H1 (cell line): ENCODE measurements at regions of chr18 and their contacts with region 1.

Region 1: DNA sequence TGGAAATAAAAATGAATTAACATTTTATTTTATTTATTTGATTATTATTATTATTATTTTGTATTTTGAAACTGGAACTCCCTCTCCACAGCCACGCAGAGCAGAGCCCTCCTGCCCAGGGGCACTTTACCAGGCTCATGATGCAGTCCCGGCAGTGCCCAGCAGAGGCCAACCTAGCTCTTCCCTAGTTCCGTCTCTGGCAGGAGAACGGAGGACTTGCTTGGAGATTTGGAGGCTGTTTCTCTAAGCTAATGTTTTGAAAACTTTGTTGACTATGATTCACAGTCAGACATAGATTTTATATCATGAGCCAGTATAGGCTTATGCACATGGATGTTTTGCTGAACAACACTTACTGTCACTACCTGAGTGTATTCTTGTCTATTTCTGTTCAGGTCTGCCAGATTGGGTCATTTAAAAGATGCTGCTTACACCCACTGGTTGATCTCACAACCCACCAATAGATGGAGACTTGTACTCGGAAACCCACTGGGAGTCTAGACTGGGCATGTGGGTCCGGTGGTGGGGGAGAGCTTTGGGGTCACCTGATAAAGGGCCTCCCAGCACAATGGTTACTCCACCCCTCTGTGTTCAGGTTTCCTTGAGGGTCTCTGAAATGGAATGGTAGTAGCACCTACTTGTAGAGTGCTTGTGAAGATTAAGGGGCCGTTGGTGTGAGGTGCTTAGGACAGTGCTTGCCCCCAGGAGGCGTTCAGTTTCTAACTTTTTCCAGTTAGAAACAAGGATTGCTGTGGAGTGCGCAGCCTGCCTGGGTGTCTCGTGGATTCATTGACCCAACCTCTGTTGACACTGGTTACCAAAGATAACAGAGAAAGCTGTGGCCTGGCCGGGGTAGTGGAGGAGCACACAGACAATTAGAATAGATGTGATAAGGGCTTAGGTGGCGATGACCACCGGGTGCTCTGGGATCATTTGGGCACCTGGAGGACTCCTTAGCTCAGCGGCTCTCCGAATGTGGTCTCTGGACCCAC is 177.3 kb downstream of the HAUS1 start:
- DNase-seq: peak; percentile 50 to 88
- H3K4me3 ChIP-seq: no peak overlapping the region
- H3K27ac ChIP-seq: no peak overlapping the region
- H3K4me1 ChIP-seq: peaks cover 6 to 9% (median 7%) of the 10 kb centered on the region in 4 experiments; a peak in 6 of 7 replicates
- H3K27me3 ChIP-seq: no peaks in the 10 kb centered on the region
- CTCF ChIP-seq: peak; percentile 76 to 95 (median 94)
- EP300 ChIP-seq: no peak
- POLR2A ChIP-seq: no peak
- RAD21 ChIP-seq: peak; percentile 92 to 93

Region 2: GRCh38 chr18:45910405-45911023 is 371.0 kb before region 1 on chr18:
- CTCF ChIA-PET with region 1: no interaction called
- POLR2A ChIA-PET with region 1: no interaction called
- DNase-seq: peak; percentile 33 to 72
- H3K4me3 ChIP-seq: no peak overlapping the region
- H3K27ac ChIP-seq: no peak overlapping the region
- H3K4me1 ChIP-seq: no peaks in the 10 kb centered on the region
- H3K27me3 ChIP-seq: no peaks in the 10 kb centered on the region
- CTCF ChIP-seq: peak; percentile 89
- EP300 ChIP-seq: no peak
- POLR2A ChIP-seq: no peak
- RAD21 ChIP-seq: peak; percentile 90 to 91

Region 3: DNA sequence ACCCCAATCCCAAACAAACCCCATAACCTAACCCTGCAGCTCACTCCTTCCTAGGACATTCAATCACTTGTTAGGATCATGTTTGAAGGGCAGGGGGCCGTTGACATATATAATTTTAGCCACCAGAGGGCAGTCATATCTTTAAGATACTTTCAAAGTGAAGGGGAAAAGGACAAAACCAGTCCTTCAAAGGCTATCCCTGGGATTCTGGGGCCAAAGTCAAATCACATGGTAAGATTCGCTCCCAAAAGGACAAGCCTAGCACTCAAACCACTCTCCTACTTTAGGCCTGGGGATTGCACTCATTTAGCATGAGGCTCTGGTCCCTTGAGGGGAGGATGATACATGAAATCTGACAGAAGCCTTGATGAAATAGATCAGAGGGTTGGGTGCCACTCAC is 132.7 kb before region 1 on chr18:
- CTCF ChIA-PET with region 1: interaction called, 13 read pairs
- POLR2A ChIA-PET with region 1: no interaction called
- DNase-seq: peak; percentile 43 to 79
- H3K4me3 ChIP-seq: no peak overlapping the region
- H3K27ac ChIP-seq: no peak overlapping the region
- H3K4me1 ChIP-seq: peaks cover 10 to 17% (median 11%) of the 10 kb centered on the region in 4 experiments
- H3K27me3 ChIP-seq: no peaks in the 10 kb centered on the region
- CTCF ChIP-seq: peak in 2 of 3 experiments; percentile 57 to 73; a peak in 2 of 4 replicates
- EP300 ChIP-seq: no peak
- POLR2A ChIP-seq: no peak
- RAD21 ChIP-seq: peak; percentile 84

Region 4: GRCh38 chr18:46315187-46315586 is 33.7 kb after region 1 on chr18:
- CTCF ChIA-PET with region 1: interaction called, 14 read pairs
- POLR2A ChIA-PET with region 1: interaction called, 3 read pairs
- DNase-seq: no peak
- H3K4me3 ChIP-seq: no peak overlapping the region
- H3K27ac ChIP-seq: no peak overlapping the region
- H3K4me1 ChIP-seq: peaks cover 0 to 8% (median 0%) of the 10 kb centered on the region in 4 experiments; a peak in 2 of 7 replicates
- H3K27me3 ChIP-seq: no peaks in the 10 kb centered on the region; a peak in 1 of 7 replicates
- CTCF ChIP-seq: no peak
- EP300 ChIP-seq: no peak
- POLR2A ChIP-seq: no peak
- RAD21 ChIP-seq: no peak

Region 5: DNA sequence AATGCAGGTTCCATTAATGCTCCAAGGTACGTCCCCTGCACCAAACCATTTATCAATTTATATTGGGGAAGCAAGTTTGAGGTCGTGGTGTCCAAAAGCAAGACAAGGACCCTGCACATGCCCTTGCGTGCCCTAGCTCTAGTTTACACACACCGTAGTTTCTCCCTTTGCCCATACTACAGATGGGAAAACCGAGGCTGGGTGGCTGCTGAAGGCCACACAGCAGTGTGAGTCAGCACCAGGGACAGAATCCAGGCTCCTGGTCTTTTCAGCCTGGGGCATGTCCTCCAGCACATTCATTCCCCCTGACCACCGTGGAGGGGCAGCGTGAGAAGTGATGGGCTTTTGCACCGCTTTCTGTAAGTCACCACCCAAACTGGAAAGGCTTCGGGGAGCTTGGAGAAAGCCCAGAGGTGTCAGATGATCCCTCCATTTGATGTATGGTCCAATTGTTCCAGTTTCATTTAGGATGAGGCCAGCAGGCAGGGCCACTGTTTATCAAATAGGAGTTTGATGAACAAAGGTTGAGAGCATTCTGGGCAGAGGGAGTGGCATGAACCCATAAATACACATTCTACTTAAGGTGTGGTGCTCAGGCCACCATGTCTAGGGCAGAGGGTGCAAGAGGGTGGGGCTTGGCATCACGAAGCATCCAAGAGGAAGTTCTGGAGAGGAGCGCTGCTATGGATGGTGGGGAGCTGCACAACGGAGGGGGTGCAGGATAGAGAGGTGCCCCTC is 96.8 kb after region 1 on chr18:
- CTCF ChIA-PET with region 1: interaction called, 148 read pairs
- POLR2A ChIA-PET with region 1: no interaction called
- DNase-seq: no peak
- H3K4me3 ChIP-seq: no peak overlapping the region
- H3K27ac ChIP-seq: no peak overlapping the region
- H3K4me1 ChIP-seq: peaks cover 0 to 11% (median 0%) of the 10 kb centered on the region in 4 experiments; a peak in 1 of 7 replicates
- H3K27me3 ChIP-seq: no peaks in the 10 kb centered on the region
- CTCF ChIP-seq: no peak
- EP300 ChIP-seq: no peak
- POLR2A ChIP-seq: no peak
- RAD21 ChIP-seq: no peak

Region 6: DNA sequence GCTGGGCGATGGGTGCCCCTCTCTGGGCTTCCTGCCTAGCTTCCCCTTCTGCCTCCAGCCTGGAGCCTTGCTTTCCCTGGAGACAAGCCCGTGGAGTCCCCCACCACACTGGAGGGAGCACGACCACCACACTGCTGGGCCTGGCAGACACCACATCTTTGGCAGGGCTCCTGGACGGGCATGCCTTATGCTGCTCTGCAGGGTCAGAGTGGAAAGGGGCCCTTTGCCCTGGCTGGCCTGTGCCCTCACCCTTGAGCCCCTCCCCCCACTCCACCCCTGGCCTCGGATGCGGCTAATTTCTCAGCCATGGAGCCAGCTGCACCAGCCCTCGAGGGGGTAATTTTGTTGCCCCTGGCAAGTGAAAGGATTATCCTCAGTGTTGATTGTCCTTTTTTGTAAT is 181.0 kb after region 1 on chr18:
- CTCF ChIA-PET with region 1: interaction called, 30 read pairs
- POLR2A ChIA-PET with region 1: interaction called, 3 read pairs
- DNase-seq: no peak
- H3K4me3 ChIP-seq: no peak overlapping the region
- H3K27ac ChIP-seq: no peak overlapping the region
- H3K4me1 ChIP-seq: peaks cover 10 to 25% (median 17%) of the 10 kb centered on the region in 4 experiments
- H3K27me3 ChIP-seq: no peaks in the 10 kb centered on the region
- CTCF ChIP-seq: no peak
- EP300 ChIP-seq: no peak
- POLR2A ChIP-seq: no peak
- RAD21 ChIP-seq: no peak

Region 7: GRCh38 chr18:46518438-46518837 is 237.0 kb after region 1 on chr18:
- CTCF ChIA-PET with region 1: interaction called, 49 read pairs
- POLR2A ChIA-PET with region 1: no interaction called
- DNase-seq: no peak
- H3K4me3 ChIP-seq: no peak overlapping the region
- H3K27ac ChIP-seq: no peak overlapping the region
- H3K4me1 ChIP-seq: no peaks in the 10 kb centered on the region
- H3K27me3 ChIP-seq: no peaks in the 10 kb centered on the region; a peak in 2 of 7 replicates
- CTCF ChIP-seq: peak; percentile 26 to 63 (median 47)
- EP300 ChIP-seq: no peak
- POLR2A ChIP-seq: no peak
- RAD21 ChIP-seq: peak; percentile 52 to 73

Region 8: DNA sequence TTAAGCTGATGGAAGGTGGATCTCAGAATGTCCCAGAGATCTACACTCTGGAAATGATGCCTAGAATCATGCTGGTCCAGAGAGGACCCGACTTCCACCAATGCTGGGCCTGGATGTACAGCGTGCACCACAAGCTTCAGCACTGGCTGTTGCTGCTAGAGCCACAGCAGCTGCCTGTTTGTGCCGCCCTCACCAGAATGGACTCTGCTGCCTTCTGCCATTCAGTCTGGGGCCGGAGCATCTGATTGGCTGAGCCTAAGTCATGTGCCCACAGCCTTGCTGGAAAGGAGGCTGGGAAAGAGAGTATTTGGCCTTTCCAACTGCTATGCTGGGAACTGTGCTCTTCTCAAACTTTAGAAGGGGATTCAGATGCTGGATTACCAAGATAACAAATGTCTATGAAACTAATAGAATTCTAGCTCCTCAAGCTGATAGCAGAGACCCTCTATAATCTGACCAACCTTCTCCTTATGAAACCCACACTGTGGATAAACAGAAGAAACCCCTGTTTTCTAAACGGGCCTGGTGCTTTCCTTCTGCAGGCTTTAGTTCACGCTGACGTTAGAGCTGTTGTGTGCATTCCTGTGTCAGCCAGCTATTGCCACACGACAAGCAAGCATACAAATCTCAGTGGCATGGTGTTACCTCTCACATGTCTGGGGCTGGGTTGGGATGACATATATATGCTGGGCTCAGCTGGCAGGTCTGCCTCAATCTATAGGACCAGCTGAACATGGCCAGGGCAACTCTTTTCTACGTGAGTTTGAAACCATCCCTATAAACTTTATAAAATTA is 379.7 kb after region 1 on chr18:
- CTCF ChIA-PET with region 1: interaction called, 49 read pairs
- POLR2A ChIA-PET with region 1: interaction called, 3 read pairs
- DNase-seq: peak in 1 of 2 experiments; percentile 65
- H3K4me3 ChIP-seq: no peak overlapping the region
- H3K27ac ChIP-seq: no peak overlapping the region
- H3K4me1 ChIP-seq: peaks cover 0 to 9% (median 1%) of the 10 kb centered on the region in 4 experiments; a peak in 1 of 7 replicates
- H3K27me3 ChIP-seq: no peaks in the 10 kb centered on the region
- CTCF ChIP-seq: no peak
- EP300 ChIP-seq: no peak
- POLR2A ChIP-seq: no peak
- RAD21 ChIP-seq: no peak